A549 (cell line): ENCODE measurements at regions of chr17 and their contacts with region 1.

Region 1: GRCh38 chr17:37382056-37382455 is 6.3 kb downstream of the C17orf78 start:
- DNase-seq: no peak
- ATAC-seq: no peak
- H3K4me3 ChIP-seq: no peak overlapping the region
- H3K27ac ChIP-seq: no peak overlapping the region
- H3K4me1 ChIP-seq: peaks cover 8% of the 10 kb centered on the region; the same call in 2 of the 3 replicates
- CTCF ChIP-seq: no peak
- EP300 ChIP-seq: no peak
- POLR2A ChIP-seq: no peak
- RAD21 ChIP-seq: no peak

Region 2: DNA sequence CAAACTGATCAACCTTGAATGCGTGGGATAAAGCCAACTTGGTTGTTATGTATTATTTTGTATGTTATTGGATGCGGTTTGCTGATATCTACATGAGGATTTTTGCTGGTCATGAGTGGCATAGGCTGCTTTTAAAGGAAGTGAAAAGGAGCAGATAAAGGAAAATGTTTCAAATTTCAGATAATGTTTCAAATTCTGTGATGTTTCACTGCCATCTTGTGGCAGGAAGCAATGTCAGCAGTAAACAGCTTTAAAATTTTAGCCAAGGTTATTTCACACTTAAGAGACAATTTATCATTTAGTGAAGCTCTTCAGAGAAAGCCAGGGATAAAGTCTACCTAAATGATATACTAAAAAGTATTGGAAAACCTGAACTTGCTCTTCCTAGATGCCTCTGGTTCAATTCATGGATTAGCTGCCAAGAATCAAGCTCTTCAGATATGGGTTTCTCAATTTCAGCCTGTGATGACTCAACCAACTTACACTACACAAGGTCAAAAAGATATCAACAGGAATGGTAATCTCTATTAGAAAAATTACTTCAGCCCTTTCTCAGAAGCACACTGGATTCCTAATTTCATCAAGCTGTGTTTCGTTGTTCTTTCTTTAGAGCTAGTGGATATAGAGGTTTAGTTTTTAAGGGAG is 142.2 kb before region 1 on chr17:
- CTCF ChIA-PET with region 1: no interaction called
- POLR2A ChIA-PET with region 1: no interaction called
- DNase-seq: peak; percentile 21 to 38
- ATAC-seq: peak; percentile 57 to 64; a peak in 4 of 6 replicates
- H3K4me3 ChIP-seq: no peak overlapping the region
- H3K27ac ChIP-seq: no peak overlapping the region
- H3K4me1 ChIP-seq: 0 out of 3 replicates have a peak, but pooled peaks cover 6% of the 10 kb centered on the region
- CTCF ChIP-seq: peak; percentile 86
- EP300 ChIP-seq: no peak
- POLR2A ChIP-seq: no peak
- RAD21 ChIP-seq: peak; percentile 44 to 60

Region 3: DNA sequence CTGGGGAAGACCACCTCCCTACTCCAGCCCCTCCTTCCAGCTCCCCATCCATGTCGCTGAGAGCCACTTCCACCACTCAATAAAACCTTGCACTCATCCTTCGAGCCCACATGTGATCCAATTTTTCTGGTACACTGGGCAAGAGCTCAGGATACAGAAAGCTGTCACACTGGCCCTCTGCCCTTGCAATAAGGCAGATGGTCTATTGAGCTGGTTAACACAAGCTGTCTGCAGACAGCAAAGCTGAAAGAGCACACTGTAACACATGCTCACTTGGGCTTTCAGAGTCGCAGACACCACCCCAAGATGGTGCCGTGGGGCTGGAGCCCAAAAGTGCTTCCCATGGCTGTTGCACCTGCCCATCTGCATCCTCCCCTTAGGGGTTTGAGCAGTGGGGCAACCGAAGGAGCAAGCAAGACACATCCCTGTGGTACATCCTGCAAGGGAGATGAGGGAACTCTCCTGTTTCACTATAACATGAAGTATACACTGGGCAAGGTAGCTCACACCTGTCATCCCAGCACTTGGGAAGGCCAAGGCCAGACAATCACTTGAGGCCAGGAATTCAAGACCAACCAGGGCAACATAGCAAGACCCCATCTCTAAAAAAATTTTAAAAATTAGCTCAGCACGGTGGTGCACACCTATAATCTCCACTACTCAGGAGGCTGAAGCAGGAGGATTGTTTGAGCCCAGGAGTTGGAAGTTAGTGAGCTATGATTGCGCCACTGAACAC is 59.1 kb before region 1 on chr17:
- CTCF ChIA-PET with region 1: no interaction called
- POLR2A ChIA-PET with region 1: no interaction called
- DNase-seq: no peak
- ATAC-seq: peak; percentile 34 to 43; a peak in 3 of 6 replicates
- H3K4me3 ChIP-seq: no peak overlapping the region
- H3K27ac ChIP-seq: no peak overlapping the region
- H3K4me1 ChIP-seq: peaks cover 7% of the 10 kb centered on the region; the same call in 1 of the 3 replicates
- CTCF ChIP-seq: no peak
- EP300 ChIP-seq: no peak
- POLR2A ChIP-seq: no peak
- RAD21 ChIP-seq: no peak

Region 4: DNA sequence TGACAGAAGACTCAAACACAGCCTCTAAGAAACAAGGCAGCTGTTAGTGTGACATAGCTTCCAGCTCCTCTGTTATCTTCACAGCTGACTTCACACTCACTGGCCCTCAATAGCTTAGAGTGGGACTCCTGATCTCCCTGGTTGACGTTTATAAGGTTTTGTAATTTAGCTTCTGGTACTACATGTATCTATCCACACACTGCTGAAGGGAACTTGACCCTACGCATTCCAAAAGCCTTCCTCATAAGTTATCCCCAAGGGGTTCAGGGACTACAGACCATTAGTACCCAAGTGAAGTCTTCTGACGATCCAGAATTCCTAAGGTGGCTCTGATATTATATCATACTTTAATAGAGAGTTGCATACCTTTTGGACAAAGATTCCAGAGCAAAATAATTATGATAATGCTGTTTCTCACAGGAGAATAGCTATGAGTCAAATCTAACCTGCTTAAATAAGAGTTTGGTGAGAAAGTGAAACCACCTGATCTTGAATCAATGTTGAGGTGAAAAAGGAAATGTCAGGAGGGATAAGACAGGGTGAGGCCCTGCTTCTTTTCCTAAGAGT is 10.1 kb after region 1 on chr17:
- CTCF ChIA-PET with region 1: interaction called, 204 read pairs
- POLR2A ChIA-PET with region 1: no interaction called
- DNase-seq: peak in 1 of 2 experiments; percentile 34
- ATAC-seq: peak; percentile 72
- H3K4me3 ChIP-seq: no peak overlapping the region
- H3K27ac ChIP-seq: no peak overlapping the region; a peak in 1 of 6 replicates
- H3K4me1 ChIP-seq: peaks cover 25% of the 10 kb centered on the region
- CTCF ChIP-seq: no peak
- EP300 ChIP-seq: no peak
- POLR2A ChIP-seq: no peak
- RAD21 ChIP-seq: no peak